ENCODE measurements at regions of chr16 and their contacts with region 1.

Region 1: DNA sequence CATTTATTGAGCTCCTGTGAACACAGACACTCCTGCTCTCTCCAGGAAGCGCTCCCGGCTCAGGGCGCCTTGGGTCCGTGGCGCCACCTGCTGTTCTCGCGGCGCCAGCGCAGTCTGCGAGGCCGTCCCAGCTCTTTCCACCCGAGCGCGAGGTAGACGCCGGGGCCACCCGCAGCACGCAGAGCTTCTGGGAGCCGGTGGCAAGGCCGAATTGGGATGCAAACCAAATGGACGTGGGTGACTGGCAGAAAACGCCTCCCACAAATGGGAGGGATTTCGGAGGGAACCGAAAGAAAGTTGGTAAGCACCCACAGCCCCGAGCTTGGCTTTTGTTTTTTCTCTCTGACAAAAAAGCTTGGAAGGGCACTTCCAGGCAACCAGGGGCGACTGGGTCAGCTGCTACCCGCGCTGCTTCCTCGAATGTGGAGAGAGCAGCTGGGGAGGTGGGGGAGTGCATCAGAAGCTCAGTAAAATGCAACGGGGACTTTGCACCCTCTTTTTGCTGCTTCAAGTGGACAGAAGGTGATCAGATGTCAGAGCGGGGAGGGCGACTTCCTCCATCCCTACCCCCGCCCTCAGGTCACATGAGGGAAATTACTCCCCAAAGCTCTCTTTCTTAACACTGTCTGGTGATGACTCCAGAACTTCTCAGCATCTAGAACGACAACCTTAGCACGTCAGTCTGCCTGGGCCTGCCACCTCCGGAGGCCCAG is 13.5 kb upstream of the N4BP1 start:
- DNase-seq: peak; percentile 81 to 86 (median 84)
- ATAC-seq: peak; percentile 99
- H3K4me3 ChIP-seq: peak overlapping the region; percentile 37
- H3K27ac ChIP-seq: no peak overlapping the region
- H3K4me1 ChIP-seq: peaks cover 0 to 16% of the 10 kb centered on the region in 2 experiments; a peak in 3 of 5 replicates
- H3K27me3 ChIP-seq: peaks cover 1 to 4% of the 10 kb centered on the region in 2 experiments; a peak in 3 of 5 replicates
- CTCF ChIP-seq: peak; percentile 94 to 97 (median 94)
- EP300 ChIP-seq: no peak
- POLR2A ChIP-seq: no peak
- RAD21 ChIP-seq: peak; percentile 84 to 94

Region 2: GRCh38 chr16:48225456-48225855 is 398.0 kb before region 1 on chr16:
- CTCF ChIA-PET with region 1: no interaction called
- POLR2A ChIA-PET with region 1: no interaction called
- in situ Hi-C with region 1: loop called (anchors 10 kb)
- intact Hi-C with region 1: loop called (anchors 5 kb)
- DNase-seq: no peak
- ATAC-seq: no peak
- H3K4me3 ChIP-seq: no peak overlapping the region
- H3K27ac ChIP-seq: no peak overlapping the region
- H3K4me1 ChIP-seq: no peaks in the 10 kb centered on the region
- H3K27me3 ChIP-seq: peaks cover 28 to 40% of the 10 kb centered on the region in 2 experiments
- CTCF ChIP-seq: no peak
- EP300 ChIP-seq: no peak
- POLR2A ChIP-seq: no peak
- RAD21 ChIP-seq: no peak

Region 3: GRCh38 chr16:48353565-48354163 is 269.8 kb before region 1 on chr16:
- CTCF ChIA-PET with region 1: interaction called, 5 read pairs
- POLR2A ChIA-PET with region 1: interaction called, 3 read pairs
- in situ Hi-C with region 1: no loop called
- intact Hi-C with region 1: loop called (anchors 1 kb)
- DNase-seq: peak; percentile 74 to 83 (median 78)
- ATAC-seq: peak; percentile 94
- H3K4me3 ChIP-seq: no peak overlapping the region
- H3K27ac ChIP-seq: no peak overlapping the region
- H3K4me1 ChIP-seq: no peaks in the 10 kb centered on the region; a peak in 1 of 5 replicates
- H3K27me3 ChIP-seq: no peaks in the 10 kb centered on the region
- CTCF ChIP-seq: peak; percentile 94 to 99 (median 99)
- EP300 ChIP-seq: no peak
- POLR2A ChIP-seq: no peak
- RAD21 ChIP-seq: peak; percentile 81 to 88

Region 4: GRCh38 chr16:48452977-48453760 is 170.3 kb before region 1 on chr16:
- CTCF ChIA-PET with region 1: no interaction called
- POLR2A ChIA-PET with region 1: no interaction called
- in situ Hi-C with region 1: no loop called
- intact Hi-C with region 1: loop called (anchors 10 kb)
- DNase-seq: no peak
- ATAC-seq: no peak
- H3K4me3 ChIP-seq: no peak overlapping the region
- H3K27ac ChIP-seq: no peak overlapping the region
- H3K4me1 ChIP-seq: peaks cover 0 to 3% of the 10 kb centered on the region in 2 experiments; a peak in 1 of 5 replicates
- H3K27me3 ChIP-seq: peaks cover 10 to 35% of the 10 kb centered on the region in 2 experiments; a peak in 4 of 5 replicates
- CTCF ChIP-seq: no peak
- EP300 ChIP-seq: no peak
- POLR2A ChIP-seq: no peak
- RAD21 ChIP-seq: no peak

Region 5: GRCh38 chr16:48531011-48531962 is 92.2 kb before region 1 on chr16:
- CTCF ChIA-PET with region 1: no interaction called
- POLR2A ChIA-PET with region 1: no interaction called
- in situ Hi-C with region 1: no loop called
- intact Hi-C with region 1: no loop called
- DNase-seq: no peak
- ATAC-seq: no peak; the same call in 2 of the 3 replicates
- H3K4me3 ChIP-seq: no peak overlapping the region
- H3K27ac ChIP-seq: no peak overlapping the region
- H3K4me1 ChIP-seq: peaks cover 0 to 3% of the 10 kb centered on the region in 2 experiments; a peak in 1 of 5 replicates
- H3K27me3 ChIP-seq: peaks cover 3 to 20% of the 10 kb centered on the region in 2 experiments; a peak in 4 of 5 replicates
- CTCF ChIP-seq: no peak
- EP300 ChIP-seq: no peak
- POLR2A ChIP-seq: no peak
- RAD21 ChIP-seq: no peak

Region 6: DNA sequence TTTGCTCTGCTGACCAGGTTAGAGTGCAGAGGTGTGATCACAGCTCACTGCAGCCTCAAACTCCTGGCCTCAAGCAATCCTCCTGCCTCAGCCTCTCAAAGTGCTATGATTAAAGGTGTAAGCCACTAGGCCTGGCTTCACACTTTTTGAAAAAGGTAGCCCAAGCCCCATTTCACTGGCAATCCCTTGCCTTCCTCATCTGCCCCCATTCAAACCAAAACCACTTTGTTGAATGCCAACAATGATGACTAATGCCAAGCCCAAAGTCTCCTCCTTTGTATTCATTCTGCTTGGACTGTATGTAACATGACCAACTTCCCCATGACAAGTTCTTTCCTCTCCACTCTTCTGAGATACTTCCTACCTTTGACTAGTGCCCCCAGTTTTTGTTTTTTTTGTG is 46.5 kb before region 1 on chr16:
- CTCF ChIA-PET with region 1: no interaction called
- POLR2A ChIA-PET with region 1: no interaction called
- in situ Hi-C with region 1: no loop called
- intact Hi-C with region 1: no loop called
- DNase-seq: no peak
- ATAC-seq: no peak
- H3K4me3 ChIP-seq: no peak overlapping the region
- H3K27ac ChIP-seq: no peak overlapping the region
- H3K4me1 ChIP-seq: no peaks in the 10 kb centered on the region; a peak in 1 of 5 replicates
- H3K27me3 ChIP-seq: no peaks in the 10 kb centered on the region
- CTCF ChIP-seq: no peak
- EP300 ChIP-seq: no peak
- POLR2A ChIP-seq: no peak
- RAD21 ChIP-seq: no peak

Region 7: DNA sequence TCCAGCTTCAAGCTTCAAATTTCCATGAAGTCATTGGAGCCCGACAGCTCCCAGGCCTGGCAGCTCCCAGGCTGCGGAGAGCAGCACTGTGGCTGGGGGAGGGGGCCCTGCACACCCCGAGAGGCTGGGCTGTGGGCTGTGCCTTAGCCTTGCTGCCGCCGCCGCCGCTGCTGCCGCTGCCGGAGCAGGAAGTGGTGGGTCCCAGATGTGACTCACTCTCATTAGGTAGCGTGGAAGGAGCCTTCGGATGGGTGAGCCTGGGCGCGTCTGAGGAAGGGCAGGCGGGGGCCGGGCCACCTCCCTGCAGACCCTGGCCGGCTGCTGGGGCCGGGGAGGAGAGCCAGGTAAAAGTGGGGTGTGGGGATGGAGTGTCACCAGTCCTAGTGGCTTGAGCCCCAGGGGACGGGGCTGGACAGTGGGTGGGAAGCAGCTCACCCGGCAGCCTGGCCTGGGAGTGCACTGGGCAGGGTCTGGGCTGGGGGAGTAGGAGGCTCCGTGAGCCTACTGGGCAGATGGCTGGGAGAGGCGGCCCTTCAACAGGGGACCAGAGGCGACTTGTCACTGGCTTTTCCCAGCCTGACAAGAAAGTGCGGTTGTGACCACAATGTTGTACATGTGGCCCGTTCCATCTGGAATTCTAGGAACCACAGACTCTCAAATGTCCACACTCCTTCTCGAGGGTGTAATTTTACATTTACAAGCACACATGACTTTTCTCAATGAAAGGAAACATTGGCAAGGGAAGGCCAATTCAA is 1643.1 kb after region 1 on chr16 and contains the start of gene ADCY7:
- CTCF ChIA-PET with region 1: no interaction called
- POLR2A ChIA-PET with region 1: no interaction called
- in situ Hi-C with region 1: loop called (anchors 25 kb)
- intact Hi-C with region 1: no loop called
- DNase-seq: peak; percentile 71 to 91 (median 78)
- ATAC-seq: peak; percentile 83
- H3K4me3 ChIP-seq: peak within 1 kb of the TSS; percentile 54
- H3K27ac ChIP-seq: peak within 1 kb of the TSS; percentile 91
- H3K4me1 ChIP-seq: peaks cover 65 to 87% of the 10 kb centered on the region in 2 experiments
- H3K27me3 ChIP-seq: no peaks in the 10 kb centered on the region
- CTCF ChIP-seq: no peak
- EP300 ChIP-seq: peak; percentile 15; the same call in 1 of the 2 replicates
- POLR2A ChIP-seq: peak; percentile 87
- RAD21 ChIP-seq: peak in 1 of 2 experiments; percentile 18; a peak in 2 of 4 replicates
- polyA plus RNA-seq, gene ADCY7: 2.3 to 2.4 TPM